ENCODE measurements at regions of chr20 and their contacts with region 1.

Region 1: GRCh38 chr20:62953839-62954703 is 1.6 kb downstream of the SLC17A9 start:
- DNase-seq: peak; percentile 92
- CTCF ChIP-seq: no peak

Region 2: DNA sequence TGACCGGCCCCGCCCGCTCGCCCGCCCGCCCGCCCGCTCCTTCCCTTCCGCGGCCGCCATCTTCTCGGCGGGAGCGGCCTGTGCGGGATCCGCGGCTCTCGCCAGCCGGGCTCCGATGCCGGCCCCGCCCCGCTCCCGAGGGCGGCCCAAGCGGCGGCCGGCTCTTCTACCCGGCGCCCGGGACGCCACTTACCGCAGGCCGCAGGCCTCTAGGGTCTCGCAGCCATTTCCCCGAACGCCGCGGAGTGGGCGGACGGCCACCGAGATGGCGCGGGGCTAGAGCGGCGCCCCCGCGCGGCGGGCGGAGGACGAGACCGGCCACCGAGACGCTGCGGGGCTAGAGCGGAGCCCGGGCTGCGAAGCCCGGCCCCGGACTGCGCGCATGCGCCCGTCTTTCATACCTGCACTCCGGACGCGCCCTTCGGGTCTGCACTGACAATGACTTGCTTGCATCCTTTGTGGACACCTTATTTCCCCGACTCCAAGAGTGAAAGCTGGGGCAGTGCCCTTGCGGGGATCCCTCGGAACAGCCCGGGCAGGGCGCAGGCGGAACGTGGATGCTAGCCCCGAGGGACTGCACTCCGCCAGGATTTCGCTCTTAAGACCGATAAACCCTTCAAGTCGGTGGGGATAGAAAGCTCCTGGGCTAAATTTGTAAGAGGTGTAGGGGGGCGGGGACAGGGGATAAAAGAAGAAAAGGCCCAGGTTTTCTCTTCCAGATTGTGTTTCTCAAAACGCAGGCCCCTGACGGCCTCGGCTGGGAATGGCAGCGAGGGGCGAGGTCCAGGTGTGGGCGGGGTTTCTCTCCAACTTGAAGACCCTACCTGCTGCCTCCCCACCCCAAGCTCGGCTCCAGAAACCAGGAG is 27.6 kb before region 1 on chr20 and contains the start of gene DIDO1:
- CTCF ChIA-PET with region 1: interaction called, 11 read pairs
- POLR2A ChIA-PET with region 1: interaction called, 3 read pairs
- DNase-seq: peak; percentile 97
- CTCF ChIP-seq: peak; percentile 51

Region 3: GRCh38 chr20:62937366-62938104 is 16.5 kb before region 1 on chr20:
- CTCF ChIA-PET with region 1: interaction called, 16 read pairs
- POLR2A ChIA-PET with region 1: interaction called, 4 read pairs
- DNase-seq: peak; percentile 97
- CTCF ChIP-seq: no peak

Region 4: DNA sequence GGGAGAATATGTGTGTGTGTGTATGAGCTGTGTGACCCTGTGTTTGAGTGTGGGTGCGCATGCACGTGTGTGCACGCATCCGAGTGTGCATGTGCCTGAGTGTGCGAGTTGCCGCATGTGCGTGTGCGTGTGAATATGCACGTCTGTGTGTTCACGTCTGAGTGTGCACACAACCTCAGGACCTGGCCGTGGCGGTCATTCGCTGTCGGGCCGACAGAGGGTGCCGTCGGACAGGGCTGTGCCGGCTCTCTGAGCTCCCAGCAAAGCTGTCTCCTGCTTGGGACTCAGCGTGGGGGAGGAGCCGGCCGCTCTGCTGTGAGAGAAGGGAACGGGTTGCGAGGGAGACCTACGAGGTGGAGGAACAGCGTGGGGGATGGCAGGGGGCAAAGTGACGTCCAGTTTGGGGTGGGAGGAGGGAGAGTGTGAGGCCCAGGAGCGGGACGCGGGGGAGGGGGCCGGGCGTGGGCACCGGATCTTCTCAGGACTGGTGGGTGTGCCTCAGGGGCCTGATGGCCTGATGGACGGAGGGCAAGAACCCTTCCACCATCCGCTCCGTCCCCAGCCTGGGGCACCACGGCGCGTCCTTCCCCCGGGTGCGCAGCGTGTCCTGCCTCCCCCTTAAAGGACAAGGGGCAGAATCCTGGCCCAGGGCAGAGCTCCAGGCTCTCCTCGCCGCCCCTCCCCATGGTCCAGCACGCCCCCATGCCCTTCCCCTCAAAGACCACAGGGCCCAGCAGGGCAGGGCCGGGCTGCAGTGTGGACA is 18.4 kb after region 1 on chr20:
- CTCF ChIA-PET with region 1: interaction called, 31 read pairs
- POLR2A ChIA-PET with region 1: interaction called, 7 read pairs
- DNase-seq: peak; percentile 93
- CTCF ChIP-seq: peak; percentile 97

Region 5: DNA sequence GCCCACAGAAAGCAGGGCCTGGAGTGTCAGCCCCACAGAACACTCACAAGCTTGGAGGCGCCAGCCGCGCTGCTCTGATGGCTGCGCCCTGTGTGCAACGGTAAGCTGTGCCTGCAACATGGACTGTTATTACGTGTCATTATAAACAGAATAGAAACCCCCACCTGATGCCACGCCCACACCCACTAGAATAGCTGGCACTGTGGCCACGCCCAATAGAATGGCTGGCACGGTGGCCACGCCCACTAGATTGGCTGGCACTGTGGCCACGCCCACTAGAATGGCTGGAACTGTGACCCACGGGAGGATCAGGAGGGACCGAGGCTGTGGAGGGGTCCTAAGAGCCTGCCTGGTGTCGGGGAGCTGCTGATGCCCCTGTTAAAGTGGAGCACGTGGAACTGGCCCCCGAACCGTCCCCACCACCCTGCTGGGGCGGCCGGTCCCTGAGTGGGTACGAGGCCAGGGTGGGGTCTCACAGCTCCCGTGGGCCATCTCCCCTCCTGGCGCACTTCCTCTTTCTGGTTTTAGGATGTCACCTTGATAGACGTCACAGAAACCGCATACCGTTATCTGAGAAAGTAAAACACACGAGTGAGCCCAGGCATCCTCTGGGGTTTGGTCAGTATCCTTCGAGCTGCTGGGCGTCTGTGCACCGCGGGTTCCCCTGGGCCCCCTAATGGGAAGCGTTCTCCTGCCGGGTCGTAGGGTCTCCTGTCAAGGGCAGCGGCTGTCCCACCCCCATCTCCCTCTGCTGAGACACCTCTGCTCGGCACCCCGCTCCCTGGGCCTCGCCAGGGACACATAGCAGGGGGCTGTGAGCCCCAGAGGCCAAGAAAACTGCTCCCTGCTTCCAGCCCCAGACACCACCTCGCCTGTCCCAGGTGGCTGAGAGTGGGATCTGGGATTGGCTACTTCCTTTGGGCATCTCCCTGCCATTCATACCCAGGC is 23.8 kb after region 1 on chr20:
- CTCF ChIA-PET with region 1: interaction called, 31 read pairs
- POLR2A ChIA-PET with region 1: interaction called, 4 read pairs
- DNase-seq: peak; percentile 86
- CTCF ChIP-seq: no peak

Region 6: GRCh38 chr20:63009045-63009961 is 55.2 kb after region 1 on chr20:
- CTCF ChIA-PET with region 1: interaction called, 33 read pairs
- POLR2A ChIA-PET with region 1: interaction called, 8 read pairs
- DNase-seq: peak; percentile 95
- CTCF ChIP-seq: peak; percentile 99

Measured in GM10248 (cell line).